ENCODE measurements at regions of chr16 and their contacts with region 1.

Region 1: DNA sequence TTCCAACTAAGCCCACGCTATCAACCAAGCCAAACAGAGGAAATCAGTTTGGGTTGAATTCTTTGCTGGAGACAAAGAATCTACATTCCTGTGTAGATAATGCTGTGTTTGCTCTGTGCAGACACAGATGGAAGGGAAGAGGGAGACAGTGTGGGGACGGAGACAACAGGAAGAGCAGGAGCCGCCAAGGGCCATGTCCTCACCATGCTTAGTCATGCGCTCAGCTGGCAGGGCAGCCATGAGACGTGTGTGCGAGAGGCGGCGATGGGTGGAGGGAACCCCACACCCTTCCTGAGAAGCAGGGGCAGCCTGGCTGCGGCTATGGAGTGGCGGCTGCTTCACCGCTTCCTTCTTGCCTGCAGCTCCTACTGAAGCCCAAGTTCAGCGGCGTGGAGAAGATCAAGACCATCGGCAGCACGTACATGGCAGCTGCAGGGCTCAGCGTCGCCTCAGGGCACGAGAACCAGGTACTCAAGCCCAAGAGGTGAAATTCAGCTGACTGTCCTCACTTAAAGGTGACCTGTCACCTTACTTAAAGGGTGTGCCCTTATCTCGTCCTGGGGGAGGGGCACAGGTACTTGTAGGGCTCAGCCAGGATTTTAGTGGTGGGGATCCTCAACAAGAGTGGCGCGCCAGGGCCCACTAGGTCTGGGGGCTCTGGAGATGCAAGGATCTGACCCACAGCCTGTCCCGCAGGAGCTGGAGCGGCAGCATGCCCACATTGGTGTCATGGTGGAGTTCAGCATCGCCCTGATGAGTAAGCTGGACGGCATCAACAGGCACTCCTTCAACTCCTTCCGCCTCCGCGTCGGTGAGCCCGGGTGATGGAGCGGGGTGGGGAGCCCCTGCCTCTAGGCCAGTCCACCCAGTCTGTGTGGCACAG is 47.5 kb downstream of the ADCY7 start:
- DNase-seq: no peak
- H3K4me3 ChIP-seq: no peak overlapping the region
- H3K27ac ChIP-seq: peak overlapping the region; percentile 16
- H3K4me1 ChIP-seq: no peaks in the 10 kb centered on the region
- H3K27me3 ChIP-seq: no peaks in the 10 kb centered on the region
- CTCF ChIP-seq: no peak

Region 2: GRCh38 chr16:50201787-50202186 is 112.0 kb before region 1 on chr16:
- CTCF ChIA-PET with region 1: interaction called, 14 read pairs
- POLR2A ChIA-PET with region 1: no interaction called
- intact Hi-C with region 1: no loop called
- DNase-seq: no peak
- H3K4me3 ChIP-seq: no peak overlapping the region
- H3K27ac ChIP-seq: peak overlapping the region; percentile 94
- H3K4me1 ChIP-seq: peaks cover 32% of the 10 kb centered on the region
- H3K27me3 ChIP-seq: no peaks in the 10 kb centered on the region
- CTCF ChIP-seq: no peak

Region 3: DNA sequence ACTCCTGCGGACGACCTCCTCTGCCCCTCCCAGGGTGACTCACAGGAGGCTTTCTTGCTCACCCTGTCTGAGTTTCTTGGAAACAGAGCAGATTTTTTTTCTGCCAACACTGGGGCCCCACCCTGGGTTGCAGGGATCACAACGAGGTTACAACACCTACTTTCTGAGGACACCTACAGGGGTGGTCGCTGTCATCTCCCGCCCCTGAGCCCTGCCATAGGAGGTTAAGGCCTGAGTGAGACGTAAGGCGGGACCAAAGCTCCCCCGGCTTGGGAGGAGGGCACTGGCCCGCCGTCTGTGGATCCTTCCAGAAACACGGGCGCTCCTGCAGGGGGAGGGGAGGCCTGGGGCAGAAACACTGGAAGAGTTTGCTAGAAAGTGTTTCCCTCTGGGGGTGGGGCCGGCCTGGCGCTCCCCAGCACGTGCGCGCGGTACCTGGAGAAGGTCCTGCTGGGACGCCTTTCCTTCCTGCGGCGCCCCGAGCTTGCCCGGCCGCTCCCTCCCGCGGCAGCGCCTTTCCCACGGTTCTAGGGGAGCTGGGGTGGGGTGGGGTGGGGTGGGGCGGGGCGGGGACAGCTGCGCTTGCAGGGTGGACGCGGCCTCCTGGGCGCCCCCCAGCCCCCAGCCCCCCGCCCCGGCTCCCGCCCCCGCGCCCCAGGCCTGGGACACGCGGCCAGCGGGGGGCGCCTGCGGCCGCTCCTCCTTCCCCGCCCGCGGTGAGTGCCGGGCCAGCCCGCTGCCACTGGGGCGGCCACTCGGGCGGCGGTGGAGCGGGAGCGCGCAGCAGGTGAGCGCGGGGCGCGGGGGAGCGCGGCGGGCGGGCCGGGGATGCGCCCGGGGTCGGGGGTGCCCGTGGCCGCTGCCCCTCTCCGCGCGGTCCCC is 68.2 kb before region 1 on chr16:
- CTCF ChIA-PET with region 1: no interaction called
- POLR2A ChIA-PET with region 1: no interaction called
- intact Hi-C with region 1: no loop called
- DNase-seq: no peak
- H3K4me3 ChIP-seq: peak overlapping the region; percentile 44
- H3K27ac ChIP-seq: no peak overlapping the region
- H3K4me1 ChIP-seq: no peaks in the 10 kb centered on the region
- H3K27me3 ChIP-seq: no peaks in the 10 kb centered on the region
- CTCF ChIP-seq: no peak